ENCODE measurements at regions of chr1 and their contacts with region 1.

Region 1: GRCh38 chr1:209860293-209860881 is 32.6 kb downstream of the UTP25 start:
- DNase-seq: peak; percentile 89 to 91
- H3K4me3 ChIP-seq: no peak overlapping the region
- H3K27ac ChIP-seq: no peak overlapping the region
- H3K4me1 ChIP-seq: peaks cover 13 to 25% of the 10 kb centered on the region in 2 donors
- H3K27me3 ChIP-seq: no peaks in the 10 kb centered on the region
- CTCF ChIP-seq: peak; percentile 76 to 85 (median 80)
- POLR2A ChIP-seq: no peak

Region 2: DNA sequence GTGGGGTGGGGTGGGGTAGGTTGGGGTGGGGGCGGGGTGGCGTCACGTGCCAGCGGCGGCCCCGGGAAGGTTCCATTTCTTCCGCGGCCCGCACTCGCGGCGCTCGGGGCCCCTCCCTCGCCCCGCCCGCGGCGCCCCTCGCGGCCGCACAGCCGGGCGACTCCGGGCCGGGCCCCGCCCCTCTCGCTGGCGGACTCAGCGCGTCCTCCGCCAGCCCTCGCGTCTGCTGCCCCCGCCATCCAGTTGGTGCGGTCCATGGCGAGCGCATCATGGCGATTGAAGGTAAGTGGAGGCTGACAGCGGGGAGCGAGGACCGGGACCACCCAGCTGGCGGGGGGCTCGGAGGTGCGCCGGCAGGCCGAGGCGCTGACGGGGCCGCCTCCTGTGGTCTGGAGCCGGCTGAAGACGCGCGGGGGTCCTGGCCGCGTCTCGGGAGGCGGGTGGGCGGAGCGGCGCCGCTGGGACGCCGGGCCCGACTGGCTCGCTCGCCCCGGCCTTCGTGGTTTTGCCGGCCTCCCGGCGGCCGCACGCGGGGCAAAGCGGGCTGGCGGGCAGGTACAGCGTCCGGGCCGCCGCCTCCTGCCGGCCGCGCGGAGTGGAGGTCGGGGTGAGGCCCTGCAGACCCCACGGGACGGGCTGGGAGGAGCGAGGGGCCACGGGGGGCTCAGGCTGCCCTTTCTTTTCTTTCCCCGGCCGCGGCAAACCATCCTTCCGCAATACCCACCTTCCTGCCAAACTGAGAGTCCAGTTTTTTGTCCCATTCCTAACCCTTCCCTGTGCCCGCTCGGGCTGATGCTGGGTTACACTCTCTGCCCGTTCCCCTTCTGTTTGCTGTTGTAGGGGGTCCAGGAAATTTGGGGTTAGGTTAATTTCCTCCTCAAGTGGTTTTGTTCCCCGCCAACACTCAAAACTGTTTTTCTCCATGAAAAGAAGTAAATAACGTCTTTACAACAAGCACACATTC is 77.9 kb after region 1 on chr1 and contains the start of gene SYT14:
- intact Hi-C with region 1: loop called (anchors 10 kb)
- DNase-seq: peak; percentile 75 to 77
- H3K4me3 ChIP-seq: peak within 1 kb of the TSS; percentile 52 to 62 (median 61)
- H3K27ac ChIP-seq: peak within 1 kb of the TSS; percentile 61 to 84 (median 75)
- H3K4me1 ChIP-seq: peaks cover 0 to 4% of the 10 kb centered on the region in 2 donors
- H3K27me3 ChIP-seq: no peaks in the 10 kb centered on the region
- CTCF ChIP-seq: peak in 1 of 6 experiments; percentile 27
- POLR2A ChIP-seq: peak in 1 of 2 donors; percentile 64
- total RNA-seq, gene SYT14: 7.6 to 20.0 (median 15.1) TPM

Region 3: DNA sequence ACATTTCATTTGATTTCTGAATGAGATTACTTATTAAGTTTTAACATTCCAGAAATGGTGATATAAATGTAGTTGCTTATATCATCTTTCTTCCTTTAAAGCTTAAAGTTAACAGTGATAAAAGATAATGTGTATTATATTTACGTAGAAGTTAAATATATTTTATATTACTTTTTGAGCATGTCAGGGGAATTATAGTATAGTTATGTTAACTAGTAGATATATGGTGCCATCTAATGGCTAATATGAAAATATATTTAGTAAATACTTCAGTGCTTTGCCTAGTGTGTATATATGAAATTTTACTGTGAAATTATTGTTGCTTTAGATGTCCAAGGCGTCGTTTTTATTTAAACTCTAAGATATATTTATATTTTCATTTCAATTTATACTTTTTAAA is 129.1 kb after region 1 on chr1:
- intact Hi-C with region 1: loop called (anchors 5 kb)
- DNase-seq: no peak
- H3K4me3 ChIP-seq: no peak overlapping the region
- H3K27ac ChIP-seq: no peak overlapping the region
- H3K4me1 ChIP-seq: peaks cover 16 to 30% of the 10 kb centered on the region in 2 donors
- H3K27me3 ChIP-seq: no peaks in the 10 kb centered on the region
- CTCF ChIP-seq: peak in 3 of 6 experiments; percentile 36 to 62 (median 43)
- POLR2A ChIP-seq: no peak

Region 4: GRCh38 chr1:210301615-210302000 is 441.2 kb after region 1 on chr1:
- intact Hi-C with region 1: loop called (anchors 10 kb)
- DNase-seq: peak in 1 of 2 donors; percentile 60
- H3K4me3 ChIP-seq: no peak overlapping the region
- H3K27ac ChIP-seq: no peak overlapping the region
- H3K4me1 ChIP-seq: peaks cover 0 to 26% of the 10 kb centered on the region in 2 donors
- H3K27me3 ChIP-seq: no peaks in the 10 kb centered on the region
- CTCF ChIP-seq: no peak
- POLR2A ChIP-seq: no peak

Region 5: DNA sequence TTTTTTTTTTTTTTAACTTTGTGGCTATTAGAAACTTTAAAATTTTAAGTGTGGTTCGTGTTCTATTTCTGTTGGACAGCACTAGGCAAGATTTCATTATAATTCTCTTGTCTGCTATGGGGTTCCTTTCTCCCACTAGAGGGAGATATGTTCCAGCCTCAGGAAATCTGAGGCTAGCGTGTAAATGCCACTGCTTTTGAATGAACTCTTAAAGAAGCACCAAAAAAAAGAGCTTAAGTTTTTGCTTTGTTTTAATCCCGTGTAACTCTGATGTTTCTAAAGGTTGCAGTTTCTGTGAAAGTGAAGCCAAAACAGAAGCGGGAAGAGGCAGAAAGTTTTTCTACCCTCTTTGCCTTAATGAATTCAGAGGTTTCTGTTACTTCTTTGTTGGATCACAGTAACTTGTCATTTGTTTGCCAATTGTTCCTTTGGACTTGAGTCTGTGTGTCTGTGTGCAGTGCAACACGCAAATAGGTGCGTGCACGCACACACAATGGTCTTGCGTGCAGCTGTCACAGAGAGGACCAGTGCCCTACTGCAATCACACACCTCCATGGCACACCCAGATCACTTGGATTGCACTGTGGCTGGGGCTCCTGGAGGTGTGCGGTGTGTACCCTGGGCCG is 500.6 kb after region 1 on chr1:
- intact Hi-C with region 1: no loop called
- DNase-seq: no peak
- H3K4me3 ChIP-seq: no peak overlapping the region
- H3K27ac ChIP-seq: no peak overlapping the region
- H3K4me1 ChIP-seq: peaks cover 27 to 37% of the 10 kb centered on the region in 2 donors
- H3K27me3 ChIP-seq: no peaks in the 10 kb centered on the region
- CTCF ChIP-seq: peak; percentile 39 to 83 (median 70)
- POLR2A ChIP-seq: no peak

Measured in thyroid gland (tissue), 4 donors.